Naive thymus-derived CD4-positive, alpha-beta T cell (primary cell): ENCODE measurements at regions of chr7 and their contacts with region 1.

Region 1: GRCh38 chr7:92461027-92462003 is 14.0 kb downstream of the GATAD1 start:
- DNase-seq: peak in 6 of 9 donors; percentile 3 to 38 (median 24)
- ATAC-seq: peak; percentile 72
- H3K4me3 ChIP-seq: no peak overlapping the region
- H3K4me3 Mint-ChIP-seq: no peak overlapping the region
- H3K27ac ChIP-seq: no peak overlapping the region
- H3K27ac Mint-ChIP-seq: peak overlapping the region in 3 of 9 donors; percentile 16 to 46 (median 45)
- H3K4me1 ChIP-seq: no peaks in the 10 kb centered on the region
- H3K4me1 Mint-ChIP-seq: peaks cover 0 to 2% (median 0%) of the 10 kb centered on the region in 7 donors
- H3K27me3 ChIP-seq: no peaks in the 10 kb centered on the region
- H3K27me3 Mint-ChIP-seq: no peaks in the 10 kb centered on the region

Region 2: GRCh38 chr7:92178927-92179924 is 282.1 kb before region 1 on chr7 and contains the start of gene LRRD1:
- CTCF ChIA-PET with region 1: interaction called, 3 read pairs
- POLR2A ChIA-PET with region 1: no interaction called
- intact Hi-C with region 1: loop called (anchors 1 to 5 kb)
- DNase-seq: peak; percentile 77 to 96 (median 89)
- ATAC-seq: peak; percentile 100
- H3K4me3 ChIP-seq: peak within 1 kb of the TSS; percentile 73
- H3K4me3 Mint-ChIP-seq: peak within 1 kb of the TSS; percentile 74 to 84 (median 80)
- H3K27ac ChIP-seq: peak within 1 kb of the TSS; percentile 37
- H3K27ac Mint-ChIP-seq: peak within 1 kb of the TSS in 5 of 9 donors; percentile 25 to 63 (median 41)
- H3K4me1 ChIP-seq: peaks cover 0 to 6% of the 10 kb centered on the region in 2 donors
- H3K4me1 Mint-ChIP-seq: peaks cover 0 to 17% (median 9%) of the 10 kb centered on the region in 7 donors
- H3K27me3 ChIP-seq: no peaks in the 10 kb centered on the region
- H3K27me3 Mint-ChIP-seq: peaks cover 0 to 33% (median 4%) of the 10 kb centered on the region in 5 donors
- total RNA-seq, gene LRRD1: 0.17 to 0.22 TPM in 2 of 5 experiments, not detected in the others

Region 3: DNA sequence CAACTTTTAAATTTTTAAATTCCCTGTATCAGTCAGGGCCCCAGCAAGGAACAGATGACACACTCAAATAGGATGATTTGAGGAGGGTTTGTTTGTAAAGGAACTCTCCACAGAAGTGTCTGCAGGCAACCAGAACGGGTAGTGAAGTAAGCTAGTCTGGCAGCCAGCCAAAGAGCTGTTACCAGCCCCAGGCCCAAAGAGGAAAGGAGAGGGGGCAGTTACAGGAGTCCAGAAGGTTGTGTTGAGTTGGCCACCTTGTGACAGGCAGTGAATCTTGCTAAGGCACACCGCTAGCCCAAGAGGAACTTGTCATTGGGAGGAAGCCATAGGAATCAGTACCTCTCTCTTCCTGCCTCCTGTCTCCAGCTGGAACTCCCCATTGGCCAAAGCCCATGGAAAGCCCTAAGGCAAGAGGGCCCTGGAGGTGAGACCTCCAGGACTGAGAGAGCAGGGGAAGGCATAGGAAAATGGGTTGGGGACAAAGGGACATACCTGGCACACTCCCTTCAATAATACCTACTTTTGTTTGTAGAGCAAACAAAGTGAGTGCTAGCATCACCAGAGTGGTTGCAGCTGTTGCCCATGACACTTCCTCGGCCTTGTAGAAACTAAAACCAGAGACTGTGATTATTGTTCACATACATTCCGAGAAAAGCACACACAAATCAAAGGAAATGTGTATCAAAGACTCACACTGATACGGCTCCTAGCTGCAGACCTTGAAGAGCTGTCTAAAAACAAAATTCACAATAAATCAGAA is 39.5 kb before region 1 on chr7:
- CTCF ChIA-PET with region 1: interaction called, 5 read pairs
- POLR2A ChIA-PET with region 1: no interaction called
- intact Hi-C with region 1: loop called (anchors 1 kb)
- DNase-seq: no peak
- ATAC-seq: no peak
- H3K4me3 ChIP-seq: no peak overlapping the region
- H3K4me3 Mint-ChIP-seq: no peak overlapping the region
- H3K27ac ChIP-seq: no peak overlapping the region
- H3K27ac Mint-ChIP-seq: no peak overlapping the region
- H3K4me1 ChIP-seq: peaks cover 0 to 6% of the 10 kb centered on the region in 2 donors
- H3K4me1 Mint-ChIP-seq: peaks cover 5 to 16% (median 11%) of the 10 kb centered on the region in 7 donors
- H3K27me3 ChIP-seq: no peaks in the 10 kb centered on the region
- H3K27me3 Mint-ChIP-seq: peaks cover 2 to 16% (median 9%) of the 10 kb centered on the region in 5 donors